Activated B cell treated with CpG ODN at 0.5 μM for 24 hours (primary cell): ENCODE measurements at regions of chr5 and their contacts with region 1.

Region 1: DNA sequence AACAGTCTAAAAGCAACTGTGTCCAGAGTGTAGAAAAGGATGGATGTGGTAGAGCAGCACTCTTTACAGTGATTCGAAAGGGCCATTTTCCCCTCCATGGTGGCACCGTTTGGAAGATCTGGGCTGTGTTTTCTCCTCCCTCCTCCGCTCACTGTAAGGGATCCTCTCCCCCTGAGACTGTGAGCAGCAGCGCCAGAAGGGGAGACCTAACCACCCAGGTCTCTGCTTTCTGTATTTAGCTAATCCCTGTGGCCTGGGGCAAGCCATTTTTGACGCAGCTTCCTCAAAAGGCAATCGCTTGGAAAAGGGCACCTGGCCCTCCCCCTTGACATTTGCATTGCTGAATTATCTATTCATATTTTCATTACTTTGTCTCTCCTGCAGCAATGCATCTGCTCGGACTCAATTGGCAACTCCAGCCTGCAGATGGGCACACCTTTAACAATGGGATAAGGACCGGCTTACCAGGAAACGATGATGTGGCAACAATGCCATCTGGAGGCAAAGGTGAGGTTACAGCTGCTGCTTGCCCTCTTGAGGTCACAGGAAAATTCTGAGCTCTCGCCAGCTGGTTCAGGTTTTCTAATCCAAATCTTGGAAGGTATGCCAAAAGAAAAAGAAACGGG is 244.3 kb upstream of the WWC1 start:
- DNase-seq: no peak
- ATAC-seq: no peak
- H3K4me3 Mint-ChIP-seq: no peak overlapping the region
- H3K27ac Mint-ChIP-seq: no peak overlapping the region
- H3K4me1 Mint-ChIP-seq: no peaks in the 10 kb centered on the region
- H3K27me3 Mint-ChIP-seq: no peaks in the 10 kb centered on the region
- CTCF ChIP-seq: no peak

Region 2: GRCh38 chr5:167503926-167504720 is 543.0 kb before region 1 on chr5:
- CTCF ChIA-PET with region 1: no interaction called
- POLR2A ChIA-PET with region 1: no interaction called
- intact Hi-C with region 1: no loop called
- DNase-seq: no peak
- ATAC-seq: no peak
- H3K4me3 Mint-ChIP-seq: no peak overlapping the region
- H3K27ac Mint-ChIP-seq: no peak overlapping the region
- H3K4me1 Mint-ChIP-seq: no peaks in the 10 kb centered on the region
- H3K27me3 Mint-ChIP-seq: no peaks in the 10 kb centered on the region
- CTCF ChIP-seq: no peak

Region 3: DNA sequence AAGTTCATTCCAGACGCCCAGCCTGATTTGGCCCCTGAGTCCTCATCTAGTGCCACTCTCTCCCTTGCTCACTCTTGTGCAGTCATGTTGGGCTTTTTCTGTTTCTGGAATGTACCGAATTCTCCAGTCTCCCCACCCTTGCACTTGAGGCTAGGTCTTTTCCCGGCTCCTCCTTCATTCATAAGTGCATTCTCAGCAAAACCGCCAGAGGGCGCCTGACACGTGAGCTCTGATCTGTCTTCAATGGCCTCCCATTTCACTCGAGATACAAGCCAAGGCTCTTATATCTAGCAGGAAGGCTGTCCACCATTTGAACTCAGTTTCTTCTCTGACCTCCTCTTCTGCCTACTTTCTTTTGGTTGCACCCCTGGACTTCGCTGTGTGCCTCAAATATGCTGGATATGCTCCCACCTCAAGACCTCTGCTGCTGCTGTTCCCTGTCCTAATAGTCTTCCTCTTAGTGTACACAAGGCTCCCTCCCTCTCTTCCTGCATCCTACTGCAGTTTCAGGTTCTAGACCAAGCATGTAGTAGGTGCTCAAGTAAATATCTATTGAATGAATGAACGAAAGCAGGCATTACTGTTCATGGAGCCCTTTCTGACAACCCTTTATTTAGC is 323.8 kb before region 1 on chr5:
- CTCF ChIA-PET with region 1: no interaction called
- POLR2A ChIA-PET with region 1: no interaction called
- intact Hi-C with region 1: loop called (anchors 10 kb)
- DNase-seq: peak; percentile 19
- ATAC-seq: peak; percentile 49
- H3K4me3 Mint-ChIP-seq: no peak overlapping the region
- H3K27ac Mint-ChIP-seq: no peak overlapping the region
- H3K4me1 Mint-ChIP-seq: no peaks in the 10 kb centered on the region
- H3K27me3 Mint-ChIP-seq: no peaks in the 10 kb centered on the region
- CTCF ChIP-seq: no peak

Region 4: DNA sequence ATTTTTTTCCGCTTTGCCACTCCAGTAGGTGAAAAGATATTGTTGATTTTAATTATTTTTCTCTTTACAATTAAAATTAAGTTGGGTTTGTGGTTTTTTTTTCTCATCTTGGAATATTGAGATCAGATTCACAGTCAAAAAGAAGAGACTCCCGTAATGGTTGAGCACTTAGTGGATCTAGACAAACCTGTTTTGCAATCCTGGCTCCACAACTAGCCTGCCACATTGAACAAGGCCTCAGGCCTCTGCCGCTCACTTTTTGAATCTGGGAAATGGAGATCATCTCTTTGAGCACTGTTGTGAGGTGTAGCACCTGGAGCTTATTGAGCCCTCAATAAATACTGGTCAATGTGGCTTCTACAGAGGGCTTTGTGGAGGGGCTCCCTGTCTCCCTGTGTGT is 402.0 kb after region 1 on chr5:
- CTCF ChIA-PET with region 1: no interaction called
- POLR2A ChIA-PET with region 1: no interaction called
- intact Hi-C with region 1: no loop called
- DNase-seq: no peak
- ATAC-seq: no peak
- H3K4me3 Mint-ChIP-seq: no peak overlapping the region
- H3K27ac Mint-ChIP-seq: no peak overlapping the region
- H3K4me1 Mint-ChIP-seq: no peaks in the 10 kb centered on the region
- H3K27me3 Mint-ChIP-seq: no peaks in the 10 kb centered on the region
- CTCF ChIP-seq: no peak